CD14-positive monocyte (primary cell): ENCODE measurements at regions of chr10 and their contacts with region 1.

Region 1: GRCh38 chr10:88693392-88694020 is 12.5 kb upstream of the LIPK start:
- DNase-seq: no peak
- H3K4me3 ChIP-seq: no peak overlapping the region
- H3K4me3 Mint-ChIP-seq: no peak overlapping the region
- H3K27ac ChIP-seq: no peak overlapping the region
- H3K27ac Mint-ChIP-seq: no peak overlapping the region
- H3K4me1 ChIP-seq: no peaks in the 10 kb centered on the region
- H3K4me1 Mint-ChIP-seq: peaks cover 1% of the 10 kb centered on the region
- H3K27me3 ChIP-seq: no peaks in the 10 kb centered on the region
- H3K27me3 Mint-ChIP-seq: peaks cover 2 to 9% (median 4%) of the 10 kb centered on the region in 3 donors
- CTCF ChIP-seq: peak; percentile 49

Region 2: GRCh38 chr10:88791924-88792323 is 98.4 kb after region 1 on chr10:
- intact Hi-C with region 1: loop called in 1 of 2 experiments (anchors 10 kb)
- DNase-seq: peak; percentile 29 to 64 (median 42)
- H3K4me3 ChIP-seq: peak overlapping the region in 1 of 3 experiments; percentile 41
- H3K4me3 Mint-ChIP-seq: no peak overlapping the region
- H3K27ac ChIP-seq: peak overlapping the region; percentile 61 to 94
- H3K27ac Mint-ChIP-seq: peak overlapping the region; percentile 90 to 97 (median 94)
- H3K4me1 ChIP-seq: peaks cover 34 to 37% of the 10 kb centered on the region in 2 donors
- H3K4me1 Mint-ChIP-seq: peaks cover 39% of the 10 kb centered on the region
- H3K27me3 ChIP-seq: peaks cover 13 to 17% of the 10 kb centered on the region in 2 donors
- H3K27me3 Mint-ChIP-seq: peaks cover 16% of the 10 kb centered on the region in 3 donors
- CTCF ChIP-seq: peak; percentile 43

Region 3: GRCh38 chr10:88810196-88810961 is 116.9 kb after region 1 on chr10:
- intact Hi-C with region 1: loop called in 1 of 2 experiments (anchors 10 kb)
- DNase-seq: peak; percentile 47 to 67 (median 66)
- H3K4me3 ChIP-seq: no peak overlapping the region
- H3K4me3 Mint-ChIP-seq: no peak overlapping the region
- H3K27ac ChIP-seq: no peak overlapping the region
- H3K27ac Mint-ChIP-seq: peak overlapping the region in 2 of 7 donors; percentile 5 to 31
- H3K4me1 ChIP-seq: no peaks in the 10 kb centered on the region
- H3K4me1 Mint-ChIP-seq: peaks cover 12% of the 10 kb centered on the region
- H3K27me3 ChIP-seq: no peaks in the 10 kb centered on the region
- H3K27me3 Mint-ChIP-seq: peaks cover 0 to 2% (median 0%) of the 10 kb centered on the region in 3 donors
- CTCF ChIP-seq: peak; percentile 85